MCF 10A (cell line): ENCODE measurements at regions of chrX and their contacts with region 1.

Region 1: GRCh38 chrX:24515447-24515846 is 50.4 kb downstream of the PDK3 start:
- DNase-seq: peak; percentile 30
- H3K4me3 Mint-ChIP-seq: no peak overlapping the region
- H3K27ac Mint-ChIP-seq: no peak overlapping the region
- H3K4me1 Mint-ChIP-seq: no peaks in the 10 kb centered on the region
- H3K27me3 Mint-ChIP-seq: peaks cover 75% of the 10 kb centered on the region
- CTCF ChIP-seq: peak; percentile 14

Region 2: GRCh38 chrX:24364326-24364725 is 151.1 kb before region 1 on chrX:
- CTCF ChIA-PET with region 1: no interaction called
- POLR2A ChIA-PET with region 1: no interaction called
- intact Hi-C with region 1: no loop called
- DNase-seq: no peak
- H3K4me3 Mint-ChIP-seq: no peak overlapping the region
- H3K27ac Mint-ChIP-seq: no peak overlapping the region
- H3K4me1 Mint-ChIP-seq: no peaks in the 10 kb centered on the region
- H3K27me3 Mint-ChIP-seq: peaks cover 79% of the 10 kb centered on the region
- CTCF ChIP-seq: no peak

Region 3: DNA sequence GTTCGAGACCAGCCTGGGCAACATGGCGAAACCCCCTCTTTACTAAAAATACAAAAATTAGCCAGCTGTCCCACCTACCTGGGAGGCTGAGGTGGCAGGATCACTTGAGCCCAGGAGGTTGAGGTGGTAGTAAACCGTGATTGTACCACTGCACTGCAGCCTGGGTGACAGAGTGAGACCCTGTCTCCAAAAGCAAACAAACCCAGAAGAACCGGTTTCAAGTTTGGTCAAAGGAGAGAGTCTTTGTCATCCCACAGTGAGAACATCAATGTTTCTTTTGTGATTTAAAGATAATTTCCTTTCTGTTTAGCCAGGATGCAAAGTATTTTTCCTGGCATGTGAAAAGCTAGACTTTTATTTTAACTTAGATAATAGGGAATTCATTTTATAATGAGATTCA is 23.7 kb before region 1 on chrX:
- CTCF ChIA-PET with region 1: no interaction called
- POLR2A ChIA-PET with region 1: no interaction called
- intact Hi-C with region 1: no loop called
- DNase-seq: no peak
- H3K4me3 Mint-ChIP-seq: no peak overlapping the region
- H3K27ac Mint-ChIP-seq: no peak overlapping the region
- H3K4me1 Mint-ChIP-seq: no peaks in the 10 kb centered on the region
- H3K27me3 Mint-ChIP-seq: peaks cover 49% of the 10 kb centered on the region
- CTCF ChIP-seq: no peak

Region 4: DNA sequence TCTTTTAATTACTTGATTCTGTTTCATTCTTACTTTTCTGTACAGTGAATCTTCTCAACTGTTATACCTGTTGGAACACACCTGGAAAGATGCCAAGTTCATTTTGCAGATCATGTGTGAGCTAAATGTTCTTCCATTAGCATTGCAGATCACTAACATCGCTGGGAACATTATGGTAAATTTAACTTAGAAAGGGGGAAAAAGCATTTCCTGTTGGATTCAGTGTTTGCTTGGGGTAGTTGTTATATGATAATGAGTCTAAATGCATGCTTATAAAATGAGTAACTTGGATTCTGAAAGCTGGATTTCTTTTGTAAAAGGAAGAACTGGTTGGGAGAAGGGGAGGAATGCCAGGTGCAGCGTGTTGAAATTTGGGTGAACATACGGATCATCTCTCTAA is 225.9 kb after region 1 on chrX:
- CTCF ChIA-PET with region 1: no interaction called
- POLR2A ChIA-PET with region 1: no interaction called
- intact Hi-C with region 1: loop called (anchors 10 kb)
- DNase-seq: no peak
- H3K4me3 Mint-ChIP-seq: no peak overlapping the region
- H3K27ac Mint-ChIP-seq: no peak overlapping the region
- H3K4me1 Mint-ChIP-seq: no peaks in the 10 kb centered on the region
- H3K27me3 Mint-ChIP-seq: peaks cover 30% of the 10 kb centered on the region
- CTCF ChIP-seq: no peak